ENCODE measurements at regions of chr12 and their contacts with region 1.

Region 1: GRCh38 chr12:810671-811415 is 58.5 kb downstream of the WNK1 start:
- DNase-seq: no peak
- ATAC-seq: no peak

Region 2: GRCh38 chr12:569803-570434 is 240.9 kb before region 1 on chr12:
- intact Hi-C with region 1: loop called (anchors 2 kb)
- DNase-seq: peak; percentile 94
- ATAC-seq: peak; percentile 75

Region 3: GRCh38 chr12:642633-643474 is 168.0 kb before region 1 on chr12:
- intact Hi-C with region 1: loop called (anchors 10 kb)
- DNase-seq: peak; percentile 89
- ATAC-seq: peak; percentile 73

Region 4: GRCh38 chr12:704516-705242 is 106.2 kb before region 1 on chr12:
- intact Hi-C with region 1: no loop called
- DNase-seq: no peak
- ATAC-seq: peak; percentile 61

Region 5: DNA sequence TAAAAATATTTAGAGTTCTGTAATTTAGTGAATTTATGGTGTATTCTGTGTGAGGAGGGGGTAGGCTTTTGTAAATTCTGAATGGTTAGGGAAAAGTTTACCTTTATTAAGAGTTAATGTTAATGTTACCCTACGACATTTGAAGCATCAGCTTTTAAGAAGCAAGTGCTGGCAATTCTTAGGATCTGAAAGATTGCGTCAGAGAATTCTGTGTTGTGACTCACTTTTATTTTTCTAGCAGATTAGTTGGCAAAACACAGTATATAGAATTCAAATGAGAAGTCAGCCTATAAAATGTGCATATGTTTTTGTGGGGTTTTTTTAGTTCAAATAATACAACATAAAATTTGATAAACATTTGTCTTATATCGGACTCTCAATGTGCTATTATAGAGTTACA is 41.1 kb after region 1 on chr12:
- intact Hi-C with region 1: no loop called
- DNase-seq: no peak
- ATAC-seq: peak; percentile 44

Measured in Right ventricle myocardium superior (tissue), 1 donor.